CD4-positive, alpha-beta T cell (primary cell): ENCODE measurements at regions of chr5 and their contacts with region 1.

Region 1: GRCh38 chr5:56056875-56057274 is 62.1 kb upstream of the IL6ST start:
- DNase-seq: no peak
- ATAC-seq: no peak
- H3K4me3 ChIP-seq: no peak overlapping the region
- H3K4me3 Mint-ChIP-seq: peak overlapping the region; percentile 63
- H3K27ac ChIP-seq: peak overlapping the region; percentile 18 to 35
- H3K27ac Mint-ChIP-seq: peak overlapping the region; percentile 86
- H3K4me1 ChIP-seq: peaks cover 83% of the 10 kb centered on the region
- H3K4me1 Mint-ChIP-seq: peaks cover 74% of the 10 kb centered on the region
- H3K27me3 ChIP-seq: no peaks in the 10 kb centered on the region
- H3K27me3 Mint-ChIP-seq: no peaks in the 10 kb centered on the region
- CTCF ChIP-seq: no peak

Region 2: DNA sequence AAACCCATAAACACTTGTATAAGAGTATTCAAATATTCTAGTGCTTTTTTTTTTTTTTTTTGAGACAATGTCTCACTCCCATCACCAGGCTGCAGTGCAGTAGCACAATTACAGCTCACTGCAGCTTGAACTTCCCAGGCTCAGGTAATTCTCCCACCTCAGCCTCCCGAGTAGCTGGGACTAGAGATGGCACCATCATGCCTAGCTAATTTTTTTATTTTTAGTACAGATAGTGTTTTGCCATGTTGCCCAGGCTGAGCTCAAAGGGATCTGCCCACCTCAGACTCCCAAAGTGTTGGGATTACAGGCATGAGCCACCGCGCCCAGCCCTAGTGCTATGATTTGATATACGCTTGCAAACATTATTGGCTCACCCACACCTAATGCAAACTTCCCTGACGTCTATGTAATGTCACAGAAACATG is 73.9 kb before region 1 on chr5:
- CTCF ChIA-PET with region 1: no interaction called
- POLR2A ChIA-PET with region 1: interaction called, 87 read pairs
- intact Hi-C with region 1: loop called in 1 of 2 experiments (anchors 2 kb)
- DNase-seq: peak in 7 of 14 experiments; percentile 18 to 71 (median 38)
- ATAC-seq: peak; percentile 44
- H3K4me3 ChIP-seq: peak overlapping the region; percentile 11
- H3K4me3 Mint-ChIP-seq: peak overlapping the region; percentile 72
- H3K27ac ChIP-seq: peak overlapping the region in 1 of 2 donors; percentile 10
- H3K27ac Mint-ChIP-seq: peak overlapping the region; percentile 94
- H3K4me1 ChIP-seq: peaks cover 31% of the 10 kb centered on the region
- H3K4me1 Mint-ChIP-seq: peaks cover 90% of the 10 kb centered on the region
- H3K27me3 ChIP-seq: no peaks in the 10 kb centered on the region
- H3K27me3 Mint-ChIP-seq: no peaks in the 10 kb centered on the region
- CTCF ChIP-seq: peak; percentile 66

Region 3: DNA sequence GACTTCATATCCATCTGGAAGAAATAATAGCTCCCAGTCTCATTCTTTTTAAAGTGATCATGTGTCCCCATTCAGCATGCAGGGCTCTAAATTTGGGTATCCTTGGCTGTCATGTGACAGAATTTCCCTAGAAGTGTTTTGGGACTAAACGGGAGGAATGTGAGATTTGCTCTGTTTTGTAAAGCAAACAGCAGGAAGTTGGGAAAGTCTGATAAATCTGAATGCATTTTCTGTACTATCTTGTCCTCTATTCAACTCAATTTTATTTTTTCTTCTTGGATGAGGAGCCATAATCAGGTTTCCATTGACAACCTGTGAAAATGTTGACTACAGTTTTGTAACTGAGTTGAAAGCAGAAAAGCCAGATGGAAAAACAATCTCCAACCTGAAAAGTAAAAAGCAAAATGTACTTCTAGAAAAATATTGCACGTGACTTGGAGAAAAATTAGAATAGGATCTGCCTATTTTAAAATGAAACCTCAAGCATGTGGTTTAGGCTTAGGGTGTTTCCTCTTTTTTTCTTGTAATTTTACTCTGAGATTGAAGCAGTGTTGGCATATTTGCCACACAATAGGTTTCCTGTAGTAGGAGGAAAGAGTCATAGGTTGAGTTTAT is 14.1 kb after region 1 on chr5:
- CTCF ChIA-PET with region 1: no interaction called
- POLR2A ChIA-PET with region 1: interaction called, 24 read pairs
- intact Hi-C with region 1: no loop called
- DNase-seq: peak in 3 of 14 experiments; percentile 54 to 71 (median 58)
- ATAC-seq: peak; percentile 86
- H3K4me3 ChIP-seq: peak overlapping the region; percentile 3
- H3K4me3 Mint-ChIP-seq: peak overlapping the region; percentile 59
- H3K27ac ChIP-seq: peak overlapping the region; percentile 64 to 84
- H3K27ac Mint-ChIP-seq: peak overlapping the region; percentile 96
- H3K4me1 ChIP-seq: peaks cover 58% of the 10 kb centered on the region
- H3K4me1 Mint-ChIP-seq: peaks cover 84% of the 10 kb centered on the region
- H3K27me3 ChIP-seq: no peaks in the 10 kb centered on the region
- H3K27me3 Mint-ChIP-seq: no peaks in the 10 kb centered on the region
- CTCF ChIP-seq: no peak

Region 4: DNA sequence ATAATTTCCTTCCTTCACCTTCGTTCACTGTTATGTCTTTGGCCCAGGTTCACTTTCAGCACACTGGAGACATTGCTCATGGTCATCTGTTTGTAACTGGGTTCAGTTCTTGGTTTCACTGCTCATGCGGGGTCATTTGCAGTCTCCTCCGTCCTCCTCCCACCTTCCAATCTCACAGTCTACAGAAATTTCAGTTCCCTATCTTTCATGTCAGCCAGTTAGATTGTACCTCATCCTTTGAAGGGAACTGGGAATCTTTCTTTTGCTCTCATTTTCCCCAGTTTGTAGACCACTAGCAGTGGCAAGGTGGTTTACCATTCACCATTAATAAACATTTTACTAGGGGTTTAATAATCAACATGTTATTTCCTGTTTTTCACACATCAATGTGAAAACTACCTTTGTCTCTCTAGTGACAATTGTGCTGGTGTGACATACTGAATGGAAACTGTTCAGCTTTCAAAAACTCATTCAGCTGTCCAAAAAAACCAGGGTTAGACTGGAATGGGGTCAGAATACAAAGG is 38.8 kb after region 1 on chr5:
- CTCF ChIA-PET with region 1: interaction called, 3 read pairs
- POLR2A ChIA-PET with region 1: interaction called, 13 read pairs
- intact Hi-C with region 1: loop called in 1 of 2 experiments (anchors 5 kb)
- DNase-seq: no peak
- ATAC-seq: no peak
- H3K4me3 ChIP-seq: no peak overlapping the region
- H3K4me3 Mint-ChIP-seq: peak overlapping the region; percentile 30
- H3K27ac ChIP-seq: peak overlapping the region; percentile 7 to 63
- H3K27ac Mint-ChIP-seq: peak overlapping the region; percentile 88
- H3K4me1 ChIP-seq: peaks cover 71% of the 10 kb centered on the region
- H3K4me1 Mint-ChIP-seq: peaks cover 88% of the 10 kb centered on the region
- H3K27me3 ChIP-seq: no peaks in the 10 kb centered on the region
- H3K27me3 Mint-ChIP-seq: no peaks in the 10 kb centered on the region
- CTCF ChIP-seq: no peak

Region 5: GRCh38 chr5:56155992-56156584 is 99.2 kb after region 1 on chr5:
- CTCF ChIA-PET with region 1: interaction called, 3 read pairs
- POLR2A ChIA-PET with region 1: interaction called, 8 read pairs
- intact Hi-C with region 1: loop called in 1 of 2 experiments (anchors 5 kb)
- DNase-seq: peak in 2 of 14 experiments; percentile 59 to 65
- ATAC-seq: no peak
- H3K4me3 ChIP-seq: no peak overlapping the region
- H3K4me3 Mint-ChIP-seq: peak overlapping the region; percentile 78
- H3K27ac ChIP-seq: peak overlapping the region; percentile 65 to 71
- H3K27ac Mint-ChIP-seq: peak overlapping the region; percentile 100
- H3K4me1 ChIP-seq: peaks cover 71% of the 10 kb centered on the region
- H3K4me1 Mint-ChIP-seq: peaks cover 86% of the 10 kb centered on the region
- H3K27me3 ChIP-seq: no peaks in the 10 kb centered on the region
- H3K27me3 Mint-ChIP-seq: no peaks in the 10 kb centered on the region
- CTCF ChIP-seq: no peak